ENCODE measurements at regions of chr4 and their contacts with region 1.

Region 1: GRCh38 chr4:53929955-53930798 is 134.2 kb downstream of the CHIC2 start:
- DNase-seq: peak; percentile 84 to 89
- H3K4me3 ChIP-seq: no peak overlapping the region
- H3K4me3 Mint-ChIP-seq: no peak overlapping the region
- H3K27ac Mint-ChIP-seq: no peak overlapping the region
- H3K4me1 ChIP-seq: peaks cover 60% of the 10 kb centered on the region
- H3K4me1 Mint-ChIP-seq: peaks cover 21% of the 10 kb centered on the region
- H3K27me3 ChIP-seq: no peaks in the 10 kb centered on the region
- H3K27me3 Mint-ChIP-seq: no peaks in the 10 kb centered on the region
- CTCF ChIP-seq: peak; percentile 65 to 72

Region 2: GRCh38 chr4:53786632-53787031 is 143.5 kb before region 1 on chr4:
- CTCF ChIA-PET with region 1: no interaction called
- POLR2A ChIA-PET with region 1: no interaction called
- intact Hi-C with region 1: no loop called
- DNase-seq: no peak
- H3K4me3 ChIP-seq: no peak overlapping the region
- H3K4me3 Mint-ChIP-seq: no peak overlapping the region
- H3K27ac Mint-ChIP-seq: no peak overlapping the region
- H3K4me1 ChIP-seq: peaks cover 12% of the 10 kb centered on the region; the same call in 1 of the 2 replicates
- H3K4me1 Mint-ChIP-seq: peaks cover 26% of the 10 kb centered on the region
- H3K27me3 ChIP-seq: no peaks in the 10 kb centered on the region
- H3K27me3 Mint-ChIP-seq: no peaks in the 10 kb centered on the region
- CTCF ChIP-seq: no peak

Region 3: GRCh38 chr4:53914313-53915016 is 15.7 kb before region 1 on chr4:
- CTCF ChIA-PET with region 1: interaction called, 11 read pairs
- POLR2A ChIA-PET with region 1: no interaction called
- intact Hi-C with region 1: no loop called
- DNase-seq: peak in 1 of 2 experiments; percentile 46
- H3K4me3 ChIP-seq: no peak overlapping the region
- H3K4me3 Mint-ChIP-seq: no peak overlapping the region
- H3K27ac Mint-ChIP-seq: peak overlapping the region; percentile 71
- H3K4me1 ChIP-seq: peaks cover 21% of the 10 kb centered on the region
- H3K4me1 Mint-ChIP-seq: peaks cover 25% of the 10 kb centered on the region
- H3K27me3 ChIP-seq: no peaks in the 10 kb centered on the region
- H3K27me3 Mint-ChIP-seq: no peaks in the 10 kb centered on the region
- CTCF ChIP-seq: no peak

Region 4: DNA sequence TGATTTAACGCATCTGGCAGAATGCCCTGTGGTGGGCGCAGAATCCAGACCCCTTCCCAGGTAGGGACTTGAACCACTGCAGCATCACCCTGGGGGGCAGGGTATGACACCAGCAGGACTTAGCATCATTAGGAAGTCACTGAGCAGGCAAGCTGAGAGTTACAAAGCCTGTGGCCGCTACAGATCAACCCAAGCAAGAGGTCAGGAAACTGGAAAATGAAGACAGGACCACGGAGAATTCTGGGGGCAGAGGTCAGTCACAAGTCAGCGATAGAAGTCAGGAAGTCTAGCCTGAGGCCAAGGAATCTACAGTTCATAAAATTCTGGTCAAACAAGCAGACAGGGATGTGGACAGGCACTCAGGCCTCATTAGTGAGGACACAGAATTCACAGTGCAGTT is 25.9 kb after region 1 on chr4:
- CTCF ChIA-PET with region 1: interaction called, 3 read pairs
- POLR2A ChIA-PET with region 1: no interaction called
- intact Hi-C with region 1: loop called (anchors 2 kb)
- DNase-seq: peak; percentile 46 to 51
- H3K4me3 ChIP-seq: no peak overlapping the region
- H3K4me3 Mint-ChIP-seq: no peak overlapping the region
- H3K27ac Mint-ChIP-seq: peak overlapping the region; percentile 58
- H3K4me1 ChIP-seq: peaks cover 21% of the 10 kb centered on the region
- H3K4me1 Mint-ChIP-seq: peaks cover 22% of the 10 kb centered on the region
- H3K27me3 ChIP-seq: no peaks in the 10 kb centered on the region
- H3K27me3 Mint-ChIP-seq: no peaks in the 10 kb centered on the region
- CTCF ChIP-seq: no peak

Region 5: GRCh38 chr4:53990641-53991040 is 60.5 kb after region 1 on chr4:
- CTCF ChIA-PET with region 1: no interaction called
- POLR2A ChIA-PET with region 1: no interaction called
- intact Hi-C with region 1: no loop called
- DNase-seq: no peak
- H3K4me3 ChIP-seq: no peak overlapping the region
- H3K4me3 Mint-ChIP-seq: no peak overlapping the region
- H3K27ac Mint-ChIP-seq: no peak overlapping the region
- H3K4me1 ChIP-seq: peaks cover 5% of the 10 kb centered on the region
- H3K4me1 Mint-ChIP-seq: no peaks in the 10 kb centered on the region
- H3K27me3 ChIP-seq: no peaks in the 10 kb centered on the region
- H3K27me3 Mint-ChIP-seq: no peaks in the 10 kb centered on the region
- CTCF ChIP-seq: no peak

Region 6: GRCh38 chr4:54050214-54050904 is 120.2 kb after region 1 on chr4:
- CTCF ChIA-PET with region 1: no interaction called
- POLR2A ChIA-PET with region 1: no interaction called
- intact Hi-C with region 1: loop called (anchors 1 kb)
- DNase-seq: peak in 1 of 2 experiments; percentile 33
- H3K4me3 ChIP-seq: no peak overlapping the region
- H3K4me3 Mint-ChIP-seq: peak overlapping the region; percentile 10
- H3K27ac Mint-ChIP-seq: peak overlapping the region; percentile 90
- H3K4me1 ChIP-seq: peaks cover 45% of the 10 kb centered on the region
- H3K4me1 Mint-ChIP-seq: peaks cover 40% of the 10 kb centered on the region
- H3K27me3 ChIP-seq: no peaks in the 10 kb centered on the region
- H3K27me3 Mint-ChIP-seq: no peaks in the 10 kb centered on the region
- CTCF ChIP-seq: no peak

Region 7: GRCh38 chr4:54144199-54144598 is 214.0 kb after region 1 on chr4:
- CTCF ChIA-PET with region 1: interaction called, 3 read pairs
- POLR2A ChIA-PET with region 1: no interaction called
- intact Hi-C with region 1: loop called (anchors 5 kb)
- DNase-seq: no peak
- H3K4me3 ChIP-seq: no peak overlapping the region
- H3K4me3 Mint-ChIP-seq: no peak overlapping the region
- H3K27ac Mint-ChIP-seq: no peak overlapping the region
- H3K4me1 ChIP-seq: peaks cover 8% of the 10 kb centered on the region
- H3K4me1 Mint-ChIP-seq: peaks cover 16% of the 10 kb centered on the region
- H3K27me3 ChIP-seq: no peaks in the 10 kb centered on the region
- H3K27me3 Mint-ChIP-seq: no peaks in the 10 kb centered on the region
- CTCF ChIP-seq: no peak

Region 8: GRCh38 chr4:54228056-54228527 is 297.9 kb after region 1 on chr4:
- CTCF ChIA-PET with region 1: interaction called, 32 read pairs
- POLR2A ChIA-PET with region 1: no interaction called
- intact Hi-C with region 1: loop called (anchors 1 kb)
- DNase-seq: peak; percentile 85 to 90
- H3K4me3 ChIP-seq: peak overlapping the region; percentile 64
- H3K4me3 Mint-ChIP-seq: peak overlapping the region; percentile 87
- H3K27ac Mint-ChIP-seq: peak overlapping the region; percentile 79
- H3K4me1 ChIP-seq: peaks cover 9% of the 10 kb centered on the region; the same call in 1 of the 2 replicates
- H3K4me1 Mint-ChIP-seq: peaks cover 13% of the 10 kb centered on the region
- H3K27me3 ChIP-seq: no peaks in the 10 kb centered on the region
- H3K27me3 Mint-ChIP-seq: no peaks in the 10 kb centered on the region
- CTCF ChIP-seq: peak; percentile 87 to 89